ENCODE measurements at regions of chr13 and their contacts with region 1.

Region 1: GRCh38 chr13:51452361-51453206 is at the start of gene INTS6:
- DNase-seq: peak in 39 of 42 donors; percentile 29 to 100 (median 100)

Region 2: DNA sequence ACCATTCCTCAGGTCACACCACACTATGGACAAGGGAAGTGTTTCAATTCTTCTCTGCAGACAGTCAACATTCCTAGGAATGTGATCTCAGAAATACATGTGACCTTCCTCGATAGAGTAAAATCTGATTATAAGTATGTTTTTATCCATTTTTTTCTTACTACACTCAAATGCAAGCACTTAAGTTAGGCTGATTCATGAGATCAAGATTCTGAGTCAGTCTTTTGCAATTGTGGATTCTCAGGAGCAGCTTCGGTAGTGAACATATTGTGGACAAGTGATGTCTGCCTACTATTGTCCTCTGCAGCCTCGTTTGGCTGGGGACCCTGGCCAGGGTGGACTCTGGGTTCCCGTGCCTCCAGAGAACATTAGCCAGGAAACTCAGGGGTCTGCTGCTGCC is 109.9 kb before region 1 on chr13:
- intact Hi-C with region 1: no loop called
- DNase-seq: no peak

Region 3: GRCh38 chr13:51590971-51591627 is 138.5 kb after region 1 on chr13:
- intact Hi-C with region 1: no loop called
- DNase-seq: no peak

Region 4: DNA sequence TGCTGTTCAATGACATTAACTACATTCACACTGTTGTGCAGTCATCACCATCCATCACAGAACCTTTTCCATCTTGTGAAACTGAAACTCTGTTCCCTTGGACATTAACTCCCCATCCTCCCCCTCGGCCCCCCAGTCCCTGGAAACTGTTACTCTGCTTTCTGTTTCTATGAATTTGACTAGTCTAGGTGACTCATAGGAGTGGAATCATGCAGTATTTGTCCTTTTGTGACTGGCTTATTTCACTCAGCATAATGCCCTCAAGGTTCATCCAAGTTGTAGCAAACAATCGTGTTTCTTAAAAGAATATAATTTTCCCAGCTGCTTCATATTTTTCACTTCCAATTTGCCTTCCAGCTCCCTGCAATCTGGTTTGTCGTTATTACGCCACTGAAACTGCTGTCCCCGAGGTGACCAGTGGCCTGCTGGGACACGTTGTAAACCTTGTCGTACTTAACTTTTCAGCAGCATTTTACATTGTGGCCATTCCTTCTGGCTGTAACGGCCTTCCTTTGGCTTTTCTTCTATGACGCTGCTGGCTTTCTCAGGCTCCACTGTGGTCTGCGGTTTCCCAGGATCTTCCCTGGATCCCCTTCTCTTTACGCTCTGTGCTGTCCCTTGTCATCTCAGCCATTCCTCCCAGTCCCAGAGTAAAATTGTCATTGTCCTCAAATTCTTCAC is 277.4 kb after region 1 on chr13:
- intact Hi-C with region 1: loop called (anchors 10 kb)
- DNase-seq: no peak

Region 5: GRCh38 chr13:51803422-51804294 is 351.1 kb after region 1 on chr13 and contains the start of gene DHRS12:
- intact Hi-C with region 1: loop called (anchors 5 kb)
- DNase-seq: peak; percentile 79 to 97 (median 93)